Panc1 (cell line): ENCODE measurements at regions of chr11 and their contacts with region 1.

Region 1: GRCh38 chr11:45339729-45340519 is 53.8 kb upstream of the SYT13 start:
- DNase-seq: peak; percentile 50
- ATAC-seq: peak; percentile 98
- H3K4me3 ChIP-seq: peak overlapping the region; percentile 4 to 35; a peak in 3 of 4 replicates
- H3K27ac ChIP-seq: no peak overlapping the region
- H3K4me1 ChIP-seq: no peaks in the 10 kb centered on the region
- H3K27me3 ChIP-seq: peaks cover 12% of the 10 kb centered on the region; the same call in 1 of the 2 replicates
- CTCF ChIP-seq: peak; percentile 95

Region 2: GRCh38 chr11:44936525-44936924 is 403.4 kb before region 1 on chr11:
- CTCF ChIA-PET with region 1: no interaction called
- POLR2A ChIA-PET with region 1: no interaction called
- in situ Hi-C with region 1: no loop called
- intact Hi-C with region 1: loop called (anchors 10 kb)
- DNase-seq: peak; percentile 57
- ATAC-seq: peak; percentile 86
- H3K4me3 ChIP-seq: no peak overlapping the region
- H3K27ac ChIP-seq: no peak overlapping the region
- H3K4me1 ChIP-seq: peaks cover 24% of the 10 kb centered on the region
- H3K27me3 ChIP-seq: no peaks in the 10 kb centered on the region
- CTCF ChIP-seq: peak; percentile 93

Region 3: GRCh38 chr11:45354976-45355705 is 15.2 kb after region 1 on chr11:
- CTCF ChIA-PET with region 1: no interaction called
- POLR2A ChIA-PET with region 1: no interaction called
- in situ Hi-C with region 1: no loop called
- intact Hi-C with region 1: no loop called
- DNase-seq: no peak
- ATAC-seq: no peak
- H3K4me3 ChIP-seq: peak overlapping the region in 1 of 2 experiments; percentile 27; a peak in 1 of 4 replicates
- H3K27ac ChIP-seq: no peak overlapping the region
- H3K4me1 ChIP-seq: no peaks in the 10 kb centered on the region
- H3K27me3 ChIP-seq: peaks cover 24% of the 10 kb centered on the region
- CTCF ChIP-seq: no peak